Prostate gland (tissue), 2 donors: ENCODE measurements at regions of chr1 and their contacts with region 1.

Region 1: GRCh38 chr1:204941421-204942338 is 71.0 kb downstream of the NFASC start:
- DNase-seq: peak; percentile 12
- H3K4me3 ChIP-seq: no peak overlapping the region
- H3K27ac ChIP-seq: no peak overlapping the region
- H3K4me1 ChIP-seq: no peaks in the 10 kb centered on the region
- H3K27me3 ChIP-seq: no peaks in the 10 kb centered on the region
- CTCF ChIP-seq: peak; percentile 66 to 80 (median 76)
- POLR2A ChIP-seq: no peak

Region 2: GRCh38 chr1:204565617-204566582 is 375.8 kb before region 1 on chr1:
- intact Hi-C with region 1: loop called (anchors 5 kb)
- DNase-seq: peak; percentile 39
- H3K4me3 ChIP-seq: no peak overlapping the region
- H3K27ac ChIP-seq: no peak overlapping the region
- H3K4me1 ChIP-seq: no peaks in the 10 kb centered on the region
- H3K27me3 ChIP-seq: no peaks in the 10 kb centered on the region
- CTCF ChIP-seq: peak in 3 of 4 experiments; percentile 59 to 71 (median 63)
- POLR2A ChIP-seq: no peak